ENCODE measurements at regions of chr17 and their contacts with region 1.

Region 1: DNA sequence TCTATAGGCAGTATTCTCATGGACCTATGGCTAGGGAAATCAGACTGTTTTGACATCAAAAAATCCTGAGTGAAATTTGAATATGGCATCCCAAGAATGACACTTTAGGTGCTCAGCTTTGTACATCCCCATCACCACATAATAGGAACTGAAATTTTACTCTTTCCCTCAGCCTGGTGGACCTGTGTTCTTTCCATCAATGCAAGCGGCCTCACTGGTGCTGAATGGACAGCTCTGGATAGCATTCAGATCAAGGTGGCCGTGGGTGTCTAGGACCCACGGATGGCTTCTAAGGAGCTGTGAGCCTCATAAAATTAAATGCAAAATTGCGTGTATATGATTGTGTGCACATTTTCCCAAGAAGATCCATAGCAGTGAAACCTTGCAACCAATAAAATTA is 152.6 kb downstream of the MAP2K6 start:
- DNase-seq: no peak
- H3K4me3 Mint-ChIP-seq: no peak overlapping the region
- H3K27ac Mint-ChIP-seq: no peak overlapping the region
- H3K4me1 Mint-ChIP-seq: no peaks in the 10 kb centered on the region
- H3K27me3 Mint-ChIP-seq: peaks cover 4% of the 10 kb centered on the region

Region 2: GRCh38 chr17:69302682-69303081 is 264.4 kb before region 1 on chr17:
- intact Hi-C with region 1: no loop called
- DNase-seq: no peak
- H3K4me3 Mint-ChIP-seq: no peak overlapping the region
- H3K27ac Mint-ChIP-seq: no peak overlapping the region
- H3K4me1 Mint-ChIP-seq: no peaks in the 10 kb centered on the region
- H3K27me3 Mint-ChIP-seq: no peaks in the 10 kb centered on the region

Region 3: GRCh38 chr17:69555056-69555455 is 12.1 kb before region 1 on chr17:
- intact Hi-C with region 1: no loop called
- DNase-seq: no peak
- H3K4me3 Mint-ChIP-seq: no peak overlapping the region
- H3K27ac Mint-ChIP-seq: no peak overlapping the region
- H3K4me1 Mint-ChIP-seq: no peaks in the 10 kb centered on the region
- H3K27me3 Mint-ChIP-seq: no peaks in the 10 kb centered on the region

Region 4: GRCh38 chr17:70552230-70552981 is 985.3 kb after region 1 on chr17:
- intact Hi-C with region 1: loop called (anchors 10 kb)
- DNase-seq: peak; percentile 56
- H3K4me3 Mint-ChIP-seq: no peak overlapping the region
- H3K27ac Mint-ChIP-seq: no peak overlapping the region
- H3K4me1 Mint-ChIP-seq: no peaks in the 10 kb centered on the region
- H3K27me3 Mint-ChIP-seq: no peaks in the 10 kb centered on the region